Right ventricle myocardium inferior (tissue), 1 donor: ENCODE measurements at regions of chr5 and their contacts with region 1.

Region 1: DNA sequence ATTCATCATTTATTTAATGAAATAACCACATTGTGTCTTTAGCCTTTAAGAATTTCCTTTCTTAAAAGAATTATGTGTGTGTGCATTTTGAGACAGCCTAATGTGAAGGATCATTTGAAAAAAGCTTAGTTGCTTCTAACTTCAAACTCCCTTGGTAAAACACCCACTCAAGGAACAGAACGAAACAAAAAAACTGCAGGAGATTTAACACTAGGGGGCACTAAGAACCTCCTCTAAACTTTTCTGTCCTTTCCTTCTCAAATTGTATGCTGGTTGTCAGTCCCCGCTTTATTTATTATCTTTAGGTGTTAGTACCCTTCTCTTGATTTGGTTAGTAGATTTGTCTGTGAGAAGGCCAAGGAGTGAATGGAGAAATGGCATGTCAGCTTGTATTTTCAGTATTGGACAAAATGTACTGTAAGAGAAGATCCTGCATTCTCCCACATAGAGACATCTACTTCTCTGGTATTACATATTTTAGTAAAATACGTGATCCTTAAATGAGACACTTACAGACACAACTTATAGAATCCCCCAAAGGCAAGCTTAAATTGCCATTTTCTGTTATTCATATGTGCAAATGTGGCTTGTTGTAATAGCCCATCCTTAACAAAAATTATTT is 229.7 kb downstream of the MRPS30 start:
- DNase-seq: no peak
- ATAC-seq: no peak

Region 2: DNA sequence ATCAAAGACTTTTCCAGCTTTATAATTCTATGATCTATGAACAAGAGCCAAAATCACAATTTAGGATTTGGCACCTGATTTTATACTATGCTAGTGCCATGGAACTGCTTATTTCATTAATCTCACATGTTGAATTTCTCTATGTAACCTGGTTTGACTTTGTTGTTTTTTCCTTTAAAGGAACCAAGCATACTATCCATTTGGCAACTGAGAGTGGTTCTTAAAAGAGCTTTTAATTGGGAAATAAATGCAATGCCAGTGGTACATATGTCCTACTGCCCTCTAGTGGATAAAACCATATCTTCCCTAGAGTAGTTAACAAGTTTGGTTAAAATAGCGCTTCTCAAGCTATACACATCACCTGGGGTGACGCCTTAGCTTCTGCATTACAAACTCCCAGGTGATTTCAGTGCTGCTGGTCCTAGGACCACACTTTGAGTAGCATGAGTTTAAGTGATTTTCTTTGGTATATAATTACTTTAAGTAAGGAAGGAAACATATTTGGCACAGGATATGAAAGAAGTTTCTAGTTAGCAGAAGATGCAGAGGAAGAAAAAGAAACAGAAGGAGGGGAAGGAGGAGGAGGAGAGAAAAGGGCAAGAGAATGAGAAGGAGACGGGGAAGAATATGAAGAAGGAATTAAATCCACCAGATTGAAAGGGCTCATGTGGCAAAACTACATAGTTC is 706.0 kb before region 1 on chr5:
- intact Hi-C with region 1: no loop called
- DNase-seq: no peak
- ATAC-seq: peak; percentile 54

Region 3: DNA sequence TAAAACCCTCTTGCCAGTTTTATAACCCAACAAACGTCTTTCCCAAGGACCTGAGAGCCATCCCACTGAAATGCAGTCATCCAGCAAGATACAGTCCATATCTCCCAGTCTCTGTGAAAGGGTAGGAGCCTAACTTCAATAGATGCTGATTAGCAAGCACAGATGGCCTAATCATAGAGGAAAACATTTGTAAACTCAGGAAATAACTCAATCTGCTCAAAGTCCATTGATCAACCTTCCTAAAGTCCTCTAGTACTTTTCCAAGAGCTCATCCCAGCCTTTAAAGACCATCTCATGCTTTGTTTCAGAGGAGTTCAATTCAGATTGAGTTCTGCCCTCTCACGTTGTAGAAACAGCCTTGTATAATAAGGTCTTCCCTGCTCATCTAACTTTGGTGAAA is 94.5 kb after region 1 on chr5:
- intact Hi-C with region 1: no loop called
- DNase-seq: no peak
- ATAC-seq: no peak

Region 4: DNA sequence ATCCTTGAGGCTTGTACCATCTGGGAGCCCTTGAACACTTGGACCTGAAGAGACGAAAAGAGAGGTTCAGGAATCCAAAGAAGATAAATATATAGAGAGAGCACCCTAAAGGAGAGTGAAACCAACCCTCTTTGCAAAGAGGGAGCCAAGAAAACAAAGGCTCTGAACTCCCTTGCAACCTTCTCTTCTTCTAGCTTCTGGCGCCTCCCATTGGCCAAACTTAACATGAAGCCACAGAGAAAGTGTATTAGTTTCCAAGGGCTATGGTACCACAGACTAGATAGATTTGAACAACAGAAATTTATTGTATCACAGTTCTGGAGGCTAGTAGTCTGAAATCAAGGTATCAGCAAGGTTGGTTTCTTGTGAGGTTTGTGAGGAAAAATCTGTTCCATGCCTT is 482.6 kb after region 1 on chr5:
- intact Hi-C with region 1: loop called (anchors 1 kb)
- DNase-seq: no peak
- ATAC-seq: no peak

Region 5: DNA sequence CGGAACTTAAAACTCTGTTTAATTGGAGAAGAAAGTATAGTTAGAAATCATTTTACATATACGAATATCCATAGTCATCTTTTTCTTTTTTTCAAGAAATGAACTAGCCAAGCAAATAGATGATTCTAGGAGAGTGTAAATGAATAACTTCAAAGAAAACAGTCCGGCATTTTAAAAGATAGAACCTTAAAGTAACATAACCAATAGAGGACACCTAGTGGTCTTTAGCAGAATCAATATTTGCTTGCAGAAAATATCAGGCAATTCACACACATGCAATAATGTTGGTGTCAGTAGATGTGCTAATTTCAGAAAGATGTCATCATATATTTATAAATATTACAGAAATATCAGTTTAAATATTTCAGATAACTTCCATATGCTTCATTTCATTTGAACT is 600.6 kb after region 1 on chr5:
- intact Hi-C with region 1: loop called (anchors 5 kb)
- DNase-seq: no peak
- ATAC-seq: no peak

Region 6: GRCh38 chr5:45696206-45696836 is 657.8 kb after region 1 on chr5 and contains the start of gene HCN1:
- intact Hi-C with region 1: loop called (anchors 2 kb)
- DNase-seq: peak; percentile 85
- ATAC-seq: peak; percentile 100
- total RNA-seq, gene HCN1: not detected